Testis (tissue), 5 donors: ENCODE measurements at regions of chr10 and their contacts with region 1.

Region 1: GRCh38 chr10:42872865-42873643 is 90.5 kb downstream of the BMS1 start:
- DNase-seq: no peak
- H3K4me3 ChIP-seq: no peak overlapping the region
- H3K27ac ChIP-seq: no peak overlapping the region
- H3K4me1 ChIP-seq: no peaks in the 10 kb centered on the region
- H3K27me3 ChIP-seq: no peaks in the 10 kb centered on the region
- CTCF ChIP-seq: no peak
- POLR2A ChIP-seq: no peak

Region 2: GRCh38 chr10:43102063-43102828 is 229.2 kb after region 1 on chr10:
- intact Hi-C with region 1: loop called (anchors 5 kb)
- DNase-seq: no peak
- H3K4me3 ChIP-seq: no peak overlapping the region
- H3K27ac ChIP-seq: no peak overlapping the region
- H3K4me1 ChIP-seq: no peaks in the 10 kb centered on the region
- H3K27me3 ChIP-seq: no peaks in the 10 kb centered on the region
- CTCF ChIP-seq: no peak
- POLR2A ChIP-seq: no peak